Ascending aorta (tissue), 2 donors: ENCODE measurements at regions of chr3 and their contacts with region 1.

Region 1: GRCh38 chr3:12187448-12188327 is 29.0 kb upstream of the TIMP4 start:
- DNase-seq: no peak
- H3K4me3 ChIP-seq: peak overlapping the region in 1 of 2 donors; percentile 4
- H3K27ac ChIP-seq: peak overlapping the region; percentile 84 to 90
- H3K4me1 ChIP-seq: peaks cover 6 to 23% of the 10 kb centered on the region in 2 donors
- H3K27me3 ChIP-seq: no peaks in the 10 kb centered on the region
- CTCF ChIP-seq: no peak

Region 2: GRCh38 chr3:12170207-12170606 is 17.5 kb before region 1 on chr3:
- intact Hi-C with region 1: no loop called
- DNase-seq: peak in 1 of 2 donors; percentile 76
- H3K4me3 ChIP-seq: no peak overlapping the region
- H3K27ac ChIP-seq: peak overlapping the region; percentile 41 to 45
- H3K4me1 ChIP-seq: peaks cover 0 to 7% of the 10 kb centered on the region in 2 donors
- H3K27me3 ChIP-seq: no peaks in the 10 kb centered on the region
- CTCF ChIP-seq: no peak

Region 3: GRCh38 chr3:12235691-12236090 is 48.0 kb after region 1 on chr3:
- intact Hi-C with region 1: loop called (anchors 5 kb)
- DNase-seq: no peak
- H3K4me3 ChIP-seq: peak overlapping the region in 1 of 2 donors; percentile 23
- H3K27ac ChIP-seq: no peak overlapping the region
- H3K4me1 ChIP-seq: peaks cover 0 to 8% of the 10 kb centered on the region in 2 donors
- H3K27me3 ChIP-seq: no peaks in the 10 kb centered on the region
- CTCF ChIP-seq: no peak

Region 4: DNA sequence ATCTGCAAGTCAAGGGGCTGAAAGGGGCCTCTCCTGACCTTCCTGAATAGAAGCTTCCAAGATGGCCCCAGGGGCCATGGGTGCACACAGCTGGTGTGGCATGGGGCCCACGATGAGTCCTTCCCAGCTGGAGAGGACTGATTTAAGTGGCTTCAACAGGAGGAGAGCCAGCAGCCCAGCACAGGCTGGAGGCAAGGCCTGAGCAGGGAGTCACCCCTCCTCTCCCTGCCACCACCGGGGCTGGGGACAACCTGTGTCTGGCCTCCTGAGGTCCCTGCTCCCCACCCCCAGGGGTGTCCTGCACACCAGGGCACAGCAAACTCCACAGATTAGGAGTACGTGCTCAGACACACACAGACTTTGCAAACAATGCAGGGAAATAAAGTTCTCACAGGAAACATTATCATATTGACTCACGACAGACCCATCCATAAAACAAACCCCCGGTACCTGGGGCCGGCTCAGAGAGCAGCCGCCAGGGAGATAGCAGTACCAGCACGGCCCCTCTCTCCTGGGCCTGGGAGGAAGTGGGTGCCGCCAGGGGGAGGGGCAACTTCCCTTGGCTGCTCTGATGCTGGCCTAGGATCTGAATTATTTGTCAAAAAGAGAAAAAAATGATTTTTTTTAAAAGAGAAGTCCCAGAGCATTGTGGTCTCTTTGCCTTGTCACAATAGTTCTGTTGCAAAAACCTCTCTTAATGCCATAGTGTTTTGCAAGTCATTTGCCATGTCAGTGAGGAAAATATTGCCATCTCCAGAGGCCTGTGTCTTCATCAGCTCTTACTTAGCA is 274.7 kb after region 1 on chr3:
- intact Hi-C with region 1: no loop called
- DNase-seq: no peak
- H3K4me3 ChIP-seq: no peak overlapping the region
- H3K27ac ChIP-seq: no peak overlapping the region
- H3K4me1 ChIP-seq: no peaks in the 10 kb centered on the region
- H3K27me3 ChIP-seq: no peaks in the 10 kb centered on the region
- CTCF ChIP-seq: no peak